Natural killer cell (primary cell): ENCODE measurements at regions of chr4 and their contacts with region 1.

Region 1: GRCh38 chr4:104896660-104897645 is 249.7 kb upstream of the TET2 start:
- DNase-seq: peak; percentile 9 to 33
- ATAC-seq: peak; percentile 85 to 95 (median 92)
- H3K4me3 ChIP-seq: no peak overlapping the region
- H3K4me3 Mint-ChIP-seq: peak overlapping the region; percentile 76
- H3K27ac ChIP-seq: peak overlapping the region; percentile 74
- H3K27ac Mint-ChIP-seq: peak overlapping the region; percentile 88 to 91
- H3K4me1 ChIP-seq: peaks cover 16% of the 10 kb centered on the region
- H3K4me1 Mint-ChIP-seq: peaks cover 65 to 73% of the 10 kb centered on the region in 2 donors
- H3K27me3 ChIP-seq: no peaks in the 10 kb centered on the region
- H3K27me3 Mint-ChIP-seq: no peaks in the 10 kb centered on the region
- CTCF ChIP-seq: no peak

Region 2: DNA sequence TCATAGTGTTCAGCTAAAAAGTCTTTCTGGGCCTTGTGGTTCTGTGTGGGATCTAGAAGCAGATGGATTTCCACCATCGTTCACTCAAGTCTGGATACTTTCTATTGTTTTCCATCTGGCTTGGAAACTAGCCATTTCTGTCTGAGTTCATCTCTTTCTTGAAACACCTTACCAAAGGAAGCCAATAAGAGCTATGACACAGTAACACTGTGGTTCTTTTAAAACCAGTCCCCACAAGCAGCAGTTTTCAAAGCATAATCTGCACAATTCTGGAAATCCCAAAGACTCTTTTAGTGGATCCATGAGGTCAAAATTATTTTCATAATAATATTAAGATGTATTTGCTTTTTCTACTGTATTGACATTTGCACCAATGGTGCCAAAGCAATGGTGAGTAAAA is 15.6 kb after region 1 on chr4:
- intact Hi-C with region 1: loop called (anchors 2 kb)
- DNase-seq: no peak
- ATAC-seq: peak in 2 of 3 donors; percentile 76 to 78
- H3K4me3 ChIP-seq: no peak overlapping the region
- H3K4me3 Mint-ChIP-seq: no peak overlapping the region
- H3K27ac ChIP-seq: peak overlapping the region; percentile 11
- H3K27ac Mint-ChIP-seq: peak overlapping the region; percentile 9 to 39
- H3K4me1 ChIP-seq: no peaks in the 10 kb centered on the region
- H3K4me1 Mint-ChIP-seq: peaks cover 13 to 14% of the 10 kb centered on the region in 2 donors
- H3K27me3 ChIP-seq: no peaks in the 10 kb centered on the region
- H3K27me3 Mint-ChIP-seq: peaks cover 0 to 2% of the 10 kb centered on the region in 2 donors
- CTCF ChIP-seq: no peak

Region 3: DNA sequence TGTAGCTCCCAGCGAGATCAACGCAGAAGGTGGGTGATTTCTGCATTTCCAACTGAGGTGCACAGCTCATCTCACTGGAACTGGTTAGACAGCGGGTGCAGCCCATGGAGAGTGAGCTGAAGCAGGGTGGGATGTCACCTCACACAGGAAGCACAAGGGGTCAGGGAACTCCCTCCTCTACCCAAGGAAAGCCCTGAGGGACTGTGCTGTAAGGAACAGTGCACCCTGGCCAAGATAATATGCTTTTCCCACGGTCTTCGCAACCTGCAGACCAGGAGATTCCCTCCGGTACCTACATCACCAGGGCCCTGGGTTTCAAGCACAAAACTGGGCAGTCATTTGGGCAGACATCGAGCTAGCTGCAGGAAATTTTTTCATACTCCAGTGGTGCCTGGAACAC is 33.3 kb after region 1 on chr4:
- intact Hi-C with region 1: loop called (anchors 2 kb)
- DNase-seq: peak in 1 of 2 donors; percentile 8
- ATAC-seq: peak; percentile 50 to 64 (median 52)
- H3K4me3 ChIP-seq: no peak overlapping the region
- H3K4me3 Mint-ChIP-seq: peak overlapping the region; percentile 81
- H3K27ac ChIP-seq: peak overlapping the region; percentile 81
- H3K27ac Mint-ChIP-seq: peak overlapping the region; percentile 89 to 92
- H3K4me1 ChIP-seq: peaks cover 18% of the 10 kb centered on the region
- H3K4me1 Mint-ChIP-seq: peaks cover 48 to 60% of the 10 kb centered on the region in 2 donors
- H3K27me3 ChIP-seq: no peaks in the 10 kb centered on the region
- H3K27me3 Mint-ChIP-seq: no peaks in the 10 kb centered on the region
- CTCF ChIP-seq: no peak

Region 4: DNA sequence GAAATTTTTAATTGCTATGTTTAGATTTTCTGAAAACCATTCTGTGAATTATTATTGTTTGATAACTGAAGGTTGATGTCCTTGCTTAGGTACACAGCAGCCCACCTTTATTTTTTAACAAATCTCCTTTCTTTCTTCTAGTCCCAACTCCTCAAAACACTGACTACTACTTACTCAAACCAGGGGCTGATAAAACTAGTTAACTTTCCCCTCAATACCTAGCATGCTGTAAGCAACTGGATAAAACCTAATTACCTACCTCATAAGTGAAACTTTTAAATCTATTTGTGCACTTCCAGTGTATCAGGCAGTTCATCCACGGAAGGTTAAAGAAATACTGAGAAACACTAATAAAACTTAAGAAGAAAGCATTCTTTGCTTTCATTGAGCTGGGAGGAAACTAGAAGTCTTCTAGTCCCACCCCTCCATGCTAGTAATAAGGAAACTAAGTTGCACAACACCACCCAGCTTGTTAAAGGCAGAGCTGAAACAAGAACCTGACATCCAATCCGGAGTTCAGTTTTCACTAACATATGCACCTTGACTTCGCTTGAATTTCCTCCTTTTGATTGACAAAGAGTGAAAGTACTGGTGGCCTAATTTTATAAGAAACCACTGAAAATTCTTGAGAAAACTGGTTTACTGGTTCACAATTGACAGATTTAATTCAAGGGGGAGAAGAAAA is 69.5 kb after region 1 on chr4:
- intact Hi-C with region 1: loop called (anchors 2 kb)
- DNase-seq: peak in 1 of 2 donors; percentile 55
- ATAC-seq: peak; percentile 92 to 98 (median 95)
- H3K4me3 ChIP-seq: no peak overlapping the region
- H3K4me3 Mint-ChIP-seq: peak overlapping the region; percentile 74
- H3K27ac ChIP-seq: peak overlapping the region; percentile 67
- H3K27ac Mint-ChIP-seq: peak overlapping the region; percentile 81 to 91
- H3K4me1 ChIP-seq: peaks cover 9% of the 10 kb centered on the region
- H3K4me1 Mint-ChIP-seq: peaks cover 24% of the 10 kb centered on the region in 2 donors
- H3K27me3 ChIP-seq: no peaks in the 10 kb centered on the region
- H3K27me3 Mint-ChIP-seq: peaks cover 0 to 3% of the 10 kb centered on the region in 2 donors
- CTCF ChIP-seq: no peak

Region 5: DNA sequence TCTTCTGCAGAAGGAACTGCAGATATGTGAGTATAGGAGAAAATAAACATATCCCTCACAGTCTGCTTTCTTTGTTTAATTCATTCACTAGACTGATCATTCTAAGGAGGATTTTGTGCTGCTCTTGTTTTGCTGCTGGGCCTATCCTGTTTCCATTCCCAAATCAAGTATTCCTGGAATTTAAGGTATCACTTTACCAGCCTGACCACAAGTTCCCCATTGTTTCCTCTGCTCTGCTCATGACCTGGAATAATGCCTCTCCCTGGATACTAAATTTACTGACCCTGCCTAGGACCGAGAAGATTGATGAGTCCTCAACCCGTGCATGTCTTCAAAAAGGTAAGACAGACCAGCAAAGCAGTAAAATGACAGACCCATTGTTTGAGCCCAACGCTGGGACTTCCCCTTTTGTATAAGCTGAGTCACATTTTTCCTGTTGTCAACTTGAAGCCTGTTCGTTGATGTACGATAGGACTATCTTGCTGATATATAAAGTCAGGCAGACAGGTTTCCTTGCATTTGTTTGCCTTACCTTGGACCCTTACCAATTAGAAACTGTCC is 164.3 kb after region 1 on chr4:
- intact Hi-C with region 1: loop called (anchors 2 kb)
- DNase-seq: peak in 1 of 2 donors; percentile 46
- ATAC-seq: peak; percentile 74 to 82 (median 79)
- H3K4me3 ChIP-seq: no peak overlapping the region
- H3K4me3 Mint-ChIP-seq: no peak overlapping the region
- H3K27ac ChIP-seq: peak overlapping the region; percentile 53
- H3K27ac Mint-ChIP-seq: peak overlapping the region in 1 of 2 donors; percentile 90
- H3K4me1 ChIP-seq: peaks cover 3% of the 10 kb centered on the region
- H3K4me1 Mint-ChIP-seq: peaks cover 17% of the 10 kb centered on the region in 2 donors
- H3K27me3 ChIP-seq: no peaks in the 10 kb centered on the region
- H3K27me3 Mint-ChIP-seq: no peaks in the 10 kb centered on the region
- CTCF ChIP-seq: no peak

Region 6: GRCh38 chr4:105146276-105147015 is 249.5 kb after region 1 on chr4 and contains the start of gene TET2:
- intact Hi-C with region 1: loop called (anchors 10 kb)
- DNase-seq: peak; percentile 72 to 90
- ATAC-seq: peak; percentile 87 to 95 (median 92)
- H3K4me3 ChIP-seq: peak within 1 kb of the TSS; percentile 67
- H3K4me3 Mint-ChIP-seq: peak within 1 kb of the TSS; percentile 97
- H3K27ac ChIP-seq: peak within 1 kb of the TSS; percentile 84
- H3K27ac Mint-ChIP-seq: peak within 1 kb of the TSS; percentile 96 to 99
- H3K4me1 ChIP-seq: peaks cover 4% of the 10 kb centered on the region
- H3K4me1 Mint-ChIP-seq: peaks cover 54 to 56% of the 10 kb centered on the region in 2 donors
- H3K27me3 ChIP-seq: no peaks in the 10 kb centered on the region
- H3K27me3 Mint-ChIP-seq: no peaks in the 10 kb centered on the region
- CTCF ChIP-seq: no peak
- total RNA-seq, gene TET2: 80.0 to 91.6 (median 82.8) TPM